Caco-2 (cell line): ENCODE measurements at regions of chr1 and their contacts with region 1.

Region 1: GRCh38 chr1:92817986-92818764 is 13.7 kb upstream of the RPL5 start:
- DNase-seq: peak in 1 of 2 experiments; percentile 23
- H3K4me3 ChIP-seq: no peak overlapping the region
- H3K4me3 Mint-ChIP-seq: peak overlapping the region; percentile 15
- H3K27ac Mint-ChIP-seq: peak overlapping the region; percentile 84
- H3K4me1 ChIP-seq: peaks cover 46% of the 10 kb centered on the region
- H3K4me1 Mint-ChIP-seq: peaks cover 36% of the 10 kb centered on the region
- H3K27me3 ChIP-seq: no peaks in the 10 kb centered on the region
- H3K27me3 Mint-ChIP-seq: no peaks in the 10 kb centered on the region
- CTCF ChIP-seq: peak in 1 of 2 experiments; percentile 27

Region 2: DNA sequence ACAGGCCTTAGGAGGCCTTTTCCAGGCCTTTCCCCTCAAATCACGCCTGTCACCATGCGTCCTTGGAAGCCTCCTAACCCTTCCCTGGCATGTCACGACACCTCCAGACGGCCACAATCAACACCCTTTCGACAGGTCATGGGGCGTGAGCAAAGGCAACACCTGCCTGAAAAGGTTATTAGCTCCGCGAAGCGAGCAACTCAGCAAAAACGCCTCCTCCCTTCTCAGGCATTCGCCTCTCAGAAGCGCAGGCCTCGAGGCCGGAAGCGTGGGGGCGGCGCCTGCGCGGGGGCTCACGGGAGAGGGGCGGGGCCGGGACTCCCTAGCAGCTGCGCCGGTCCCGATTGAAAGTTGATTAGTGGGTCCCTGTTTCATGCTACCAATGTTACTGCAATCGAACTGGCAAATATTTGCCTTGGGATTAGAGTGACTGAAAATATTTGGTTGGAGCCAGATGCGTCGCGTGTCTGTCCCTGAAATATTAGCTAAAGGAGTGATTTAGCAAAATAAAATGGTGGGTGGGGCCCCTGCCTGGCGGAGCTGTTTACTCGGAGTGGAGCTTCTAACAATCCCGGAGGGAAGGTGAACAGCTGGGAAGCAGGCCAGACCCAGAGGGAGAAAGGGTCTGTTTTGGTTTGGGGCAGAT is 376.4 kb before region 1 on chr1:
- CTCF ChIA-PET with region 1: no interaction called
- POLR2A ChIA-PET with region 1: no interaction called
- intact Hi-C with region 1: no loop called
- DNase-seq: peak; percentile 88 to 90
- H3K4me3 ChIP-seq: peak overlapping the region; percentile 43
- H3K4me3 Mint-ChIP-seq: peak overlapping the region; percentile 85
- H3K27ac Mint-ChIP-seq: peak overlapping the region; percentile 94
- H3K4me1 ChIP-seq: peaks cover 25% of the 10 kb centered on the region
- H3K4me1 Mint-ChIP-seq: peaks cover 19% of the 10 kb centered on the region
- H3K27me3 ChIP-seq: no peaks in the 10 kb centered on the region
- H3K27me3 Mint-ChIP-seq: no peaks in the 10 kb centered on the region
- CTCF ChIP-seq: no peak

Region 3: DNA sequence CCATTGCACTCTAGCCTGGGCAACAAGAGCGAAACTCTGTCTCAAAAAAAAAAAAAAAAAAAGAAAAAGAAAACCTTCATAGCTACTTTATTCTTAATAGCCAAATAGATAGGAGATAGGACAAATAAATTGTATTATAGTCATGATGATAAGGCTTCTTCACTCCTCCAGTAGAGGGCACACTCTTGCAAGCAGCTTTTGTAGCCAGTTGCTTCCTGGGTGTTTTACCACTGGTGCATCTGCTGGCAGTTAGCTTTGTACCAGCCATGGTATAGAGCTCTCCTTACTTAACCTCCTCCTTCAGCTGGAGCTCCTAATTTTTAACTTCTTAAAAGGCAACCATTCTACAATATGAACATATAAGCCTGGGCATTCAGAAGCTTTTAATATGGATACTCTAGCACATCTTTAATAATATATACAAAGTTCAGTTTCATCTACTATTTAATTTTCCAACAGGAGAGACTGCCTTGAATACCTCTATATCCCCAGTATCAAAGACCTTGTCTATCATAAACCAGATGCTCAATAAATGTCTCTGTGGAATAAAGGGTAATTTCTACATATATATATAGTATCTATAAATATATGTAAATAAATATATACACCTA is 69.0 kb before region 1 on chr1:
- CTCF ChIA-PET with region 1: interaction called, 17 read pairs
- POLR2A ChIA-PET with region 1: no interaction called
- intact Hi-C with region 1: loop called (anchors 1 kb)
- DNase-seq: peak in 1 of 2 experiments; percentile 49
- H3K4me3 ChIP-seq: no peak overlapping the region
- H3K4me3 Mint-ChIP-seq: no peak overlapping the region
- H3K27ac Mint-ChIP-seq: no peak overlapping the region
- H3K4me1 ChIP-seq: peaks cover 6% of the 10 kb centered on the region; the same call in 1 of the 2 replicates
- H3K4me1 Mint-ChIP-seq: peaks cover 11% of the 10 kb centered on the region
- H3K27me3 ChIP-seq: no peaks in the 10 kb centered on the region
- H3K27me3 Mint-ChIP-seq: no peaks in the 10 kb centered on the region
- CTCF ChIP-seq: peak; percentile 42 to 51

Region 4: DNA sequence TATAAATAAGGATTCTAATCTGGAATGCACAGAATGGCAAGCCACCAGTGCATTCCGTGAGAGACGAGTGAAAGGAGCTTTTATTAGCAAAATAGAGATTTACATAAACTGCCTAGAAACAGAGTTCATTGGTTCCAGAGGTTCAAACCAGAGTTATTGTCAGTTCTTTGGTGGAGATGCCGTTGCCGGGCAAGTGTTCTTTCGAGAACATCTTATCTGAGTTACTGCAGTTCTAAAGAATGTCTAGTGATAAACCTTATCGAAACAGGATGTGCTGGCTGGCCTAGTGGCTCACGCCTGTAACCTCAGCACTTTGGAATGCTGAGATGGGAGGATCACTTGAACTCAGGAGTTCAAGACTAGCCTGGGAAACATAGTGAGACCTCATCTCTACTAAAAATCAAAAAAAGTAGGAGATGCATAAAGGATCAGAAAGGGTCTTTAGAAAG is 13.4 kb before region 1 on chr1:
- CTCF ChIA-PET with region 1: interaction called, 9 read pairs
- POLR2A ChIA-PET with region 1: no interaction called
- intact Hi-C with region 1: loop called (anchors 1 kb)
- DNase-seq: peak; percentile 84 to 92
- H3K4me3 ChIP-seq: no peak overlapping the region
- H3K4me3 Mint-ChIP-seq: no peak overlapping the region
- H3K27ac Mint-ChIP-seq: peak overlapping the region; percentile 89
- H3K4me1 ChIP-seq: peaks cover 19% of the 10 kb centered on the region
- H3K4me1 Mint-ChIP-seq: peaks cover 13% of the 10 kb centered on the region
- H3K27me3 ChIP-seq: no peaks in the 10 kb centered on the region
- H3K27me3 Mint-ChIP-seq: no peaks in the 10 kb centered on the region
- CTCF ChIP-seq: no peak